ENCODE measurements at regions of chr18 and their contacts with region 1.

Region 1: GRCh38 chr18:32310101-32310500 is 120.3 kb downstream of the MEP1B start:
- DNase-seq: no peak
- H3K4me3 ChIP-seq: no peak overlapping the region
- H3K4me3 Mint-ChIP-seq: no peak overlapping the region
- H3K27ac ChIP-seq: no peak overlapping the region
- H3K27ac Mint-ChIP-seq: no peak overlapping the region
- H3K4me1 ChIP-seq: no peaks in the 10 kb centered on the region
- H3K4me1 Mint-ChIP-seq: no peaks in the 10 kb centered on the region
- H3K27me3 ChIP-seq: no peaks in the 10 kb centered on the region
- H3K27me3 Mint-ChIP-seq: peaks cover 0 to 3% (median 3%) of the 10 kb centered on the region in 3 donors
- CTCF ChIP-seq: no peak

Region 2: DNA sequence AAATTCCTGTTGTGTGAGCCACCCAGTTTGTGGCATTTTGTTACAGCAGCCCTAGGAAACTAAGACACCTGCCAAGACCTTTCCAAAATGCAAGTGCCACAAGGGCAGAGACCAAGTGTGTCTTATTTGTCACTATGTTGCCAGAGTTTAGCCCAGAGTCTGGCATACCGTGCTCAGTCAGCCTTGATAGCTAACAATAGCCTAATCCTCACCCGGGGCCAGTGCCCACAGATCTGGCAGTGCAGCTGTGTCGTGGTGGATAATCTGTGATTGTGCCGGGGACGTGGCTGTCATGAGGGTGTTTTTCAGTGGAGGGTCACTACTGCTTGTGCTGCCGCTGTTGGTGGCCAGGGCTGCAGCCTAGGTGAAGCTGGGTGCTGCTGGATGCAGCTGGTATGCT is 66.7 kb before region 1 on chr18:
- intact Hi-C with region 1: no loop called
- DNase-seq: no peak
- H3K4me3 ChIP-seq: no peak overlapping the region
- H3K4me3 Mint-ChIP-seq: no peak overlapping the region
- H3K27ac ChIP-seq: no peak overlapping the region
- H3K27ac Mint-ChIP-seq: no peak overlapping the region
- H3K4me1 ChIP-seq: no peaks in the 10 kb centered on the region
- H3K4me1 Mint-ChIP-seq: no peaks in the 10 kb centered on the region
- H3K27me3 ChIP-seq: no peaks in the 10 kb centered on the region
- H3K27me3 Mint-ChIP-seq: peaks cover 0 to 3% (median 3%) of the 10 kb centered on the region in 3 donors
- CTCF ChIP-seq: no peak

Region 3: GRCh38 chr18:32333781-32334180 is 23.7 kb after region 1 on chr18:
- intact Hi-C with region 1: loop called in 1 of 2 experiments (anchors 2 kb)
- DNase-seq: no peak
- H3K4me3 ChIP-seq: no peak overlapping the region
- H3K4me3 Mint-ChIP-seq: no peak overlapping the region
- H3K27ac ChIP-seq: no peak overlapping the region
- H3K27ac Mint-ChIP-seq: no peak overlapping the region
- H3K4me1 ChIP-seq: no peaks in the 10 kb centered on the region
- H3K4me1 Mint-ChIP-seq: no peaks in the 10 kb centered on the region
- H3K27me3 ChIP-seq: no peaks in the 10 kb centered on the region
- H3K27me3 Mint-ChIP-seq: peaks cover 0 to under 1% (median 0%) of the 10 kb centered on the region in 3 donors
- CTCF ChIP-seq: no peak